Psoas muscle (tissue), 8 donors: ENCODE measurements at regions of chr15 and their contacts with region 1.

Region 1: DNA sequence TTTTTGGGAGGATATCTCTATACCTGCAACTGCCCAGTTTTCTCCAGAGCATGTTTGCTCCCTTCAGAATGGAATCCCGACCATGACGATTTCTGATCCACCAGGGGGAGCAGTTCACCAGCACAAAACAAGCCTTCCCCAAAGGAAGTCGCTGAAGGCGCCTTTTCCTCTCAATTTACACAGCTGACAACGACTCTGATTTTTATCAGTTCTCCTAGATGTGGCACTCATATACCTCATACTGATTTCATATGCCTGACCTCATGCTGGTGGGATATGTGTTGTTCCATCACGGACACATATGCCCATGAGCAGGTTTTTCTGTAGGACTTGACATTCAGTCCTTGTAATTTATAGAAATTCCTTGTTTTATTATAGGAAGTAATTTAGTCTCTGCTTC is 1028.2 kb downstream of the MCTP2 start:
- DNase-seq: peak; percentile 31 to 57
- ATAC-seq: peak; percentile 52 to 82 (median 56)
- H3K4me3 ChIP-seq: no peak overlapping the region
- H3K27ac ChIP-seq: no peak overlapping the region
- H3K4me1 ChIP-seq: no peaks in the 10 kb centered on the region
- H3K27me3 ChIP-seq: peaks cover 0 to 4% (median 0%) of the 10 kb centered on the region in 3 donors
- CTCF ChIP-seq: peak; percentile 78

Region 2: DNA sequence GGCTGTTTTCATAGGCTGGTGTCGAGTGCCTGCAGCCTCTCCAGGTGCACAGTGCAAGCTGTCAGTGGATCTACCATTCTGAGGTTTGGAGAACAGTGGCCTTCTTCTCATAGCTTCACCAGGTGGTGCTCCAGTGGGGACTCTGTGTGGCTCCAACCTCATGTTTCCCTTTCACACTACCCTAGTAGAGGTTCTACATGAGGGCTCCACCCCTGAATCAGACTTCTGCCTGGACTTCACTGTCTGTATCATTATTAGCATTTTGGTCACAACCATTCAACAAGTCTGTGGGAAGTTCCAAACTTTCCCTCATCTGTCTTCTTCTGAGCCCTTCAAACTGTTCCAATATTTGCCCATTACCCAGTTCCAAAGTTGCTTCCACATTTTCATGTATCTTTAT is 24.5 kb before region 1 on chr15:
- intact Hi-C with region 1: no loop called
- DNase-seq: no peak
- ATAC-seq: no peak
- H3K4me3 ChIP-seq: no peak overlapping the region
- H3K27ac ChIP-seq: no peak overlapping the region
- H3K4me1 ChIP-seq: no peaks in the 10 kb centered on the region
- H3K27me3 ChIP-seq: no peaks in the 10 kb centered on the region
- CTCF ChIP-seq: no peak

Region 3: GRCh38 chr15:96345560-96346399 is 1086.3 kb after region 1 on chr15:
- intact Hi-C with region 1: loop called (anchors 2 to 5 kb)
- DNase-seq: peak; percentile 78 to 89
- ATAC-seq: peak; percentile 84 to 90 (median 88)
- H3K4me3 ChIP-seq: peak overlapping the region; percentile 92
- H3K27ac ChIP-seq: peak overlapping the region; percentile 94
- H3K4me1 ChIP-seq: no peaks in the 10 kb centered on the region
- H3K27me3 ChIP-seq: no peaks in the 10 kb centered on the region
- CTCF ChIP-seq: peak; percentile 67

Region 4: GRCh38 chr15:97234851-97235610 is 1975.5 kb after region 1 on chr15:
- intact Hi-C with region 1: loop called (anchors 5 to 10 kb)
- DNase-seq: no peak
- ATAC-seq: peak in 3 of 4 donors; percentile 30 to 60 (median 38)
- H3K4me3 ChIP-seq: no peak overlapping the region
- H3K27ac ChIP-seq: no peak overlapping the region
- H3K4me1 ChIP-seq: no peaks in the 10 kb centered on the region
- H3K27me3 ChIP-seq: peaks cover 0 to 5% (median 0%) of the 10 kb centered on the region in 3 donors
- CTCF ChIP-seq: peak; percentile 75